ENCODE measurements at regions of chr3 and their contacts with region 1.

Region 1: GRCh38 chr3:98022978-98023820 is 11.9 kb downstream of the GABRR3 start:
- DNase-seq: peak; percentile 94
- ATAC-seq: peak; percentile 85

Region 2: GRCh38 chr3:97510795-97511194 is 512.4 kb before region 1 on chr3:
- intact Hi-C with region 1: no loop called
- DNase-seq: no peak
- ATAC-seq: no peak

Region 3: DNA sequence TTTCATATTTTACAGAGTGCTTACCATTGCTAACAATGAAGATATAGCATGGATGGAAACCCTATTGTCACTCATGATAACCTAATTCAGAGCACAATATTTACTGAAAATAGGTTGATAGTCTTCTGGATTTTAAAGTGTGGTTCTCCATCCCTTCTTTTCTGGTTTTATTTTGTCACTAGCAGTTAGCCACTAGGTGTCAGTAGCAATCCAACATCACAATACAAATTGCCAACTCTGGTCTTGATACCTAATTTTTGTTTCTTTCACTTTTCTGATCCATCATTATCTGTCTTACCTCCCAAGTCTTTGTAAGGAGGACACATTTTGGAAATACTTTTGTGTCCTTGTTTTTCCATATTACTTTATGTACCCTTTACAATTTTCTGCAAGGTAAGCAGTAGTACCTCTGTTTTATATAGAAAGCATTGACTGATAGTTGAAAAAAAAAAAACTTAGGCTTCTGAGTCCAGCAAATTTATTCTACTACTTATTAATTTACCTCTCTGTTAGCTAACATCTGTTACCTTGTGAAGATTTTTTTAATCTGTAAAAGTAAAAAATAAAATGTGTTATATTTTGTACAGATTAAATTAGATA is 229.7 kb before region 1 on chr3:
- intact Hi-C with region 1: loop called (anchors 1 kb)
- DNase-seq: no peak
- ATAC-seq: peak; percentile 37

Region 4: DNA sequence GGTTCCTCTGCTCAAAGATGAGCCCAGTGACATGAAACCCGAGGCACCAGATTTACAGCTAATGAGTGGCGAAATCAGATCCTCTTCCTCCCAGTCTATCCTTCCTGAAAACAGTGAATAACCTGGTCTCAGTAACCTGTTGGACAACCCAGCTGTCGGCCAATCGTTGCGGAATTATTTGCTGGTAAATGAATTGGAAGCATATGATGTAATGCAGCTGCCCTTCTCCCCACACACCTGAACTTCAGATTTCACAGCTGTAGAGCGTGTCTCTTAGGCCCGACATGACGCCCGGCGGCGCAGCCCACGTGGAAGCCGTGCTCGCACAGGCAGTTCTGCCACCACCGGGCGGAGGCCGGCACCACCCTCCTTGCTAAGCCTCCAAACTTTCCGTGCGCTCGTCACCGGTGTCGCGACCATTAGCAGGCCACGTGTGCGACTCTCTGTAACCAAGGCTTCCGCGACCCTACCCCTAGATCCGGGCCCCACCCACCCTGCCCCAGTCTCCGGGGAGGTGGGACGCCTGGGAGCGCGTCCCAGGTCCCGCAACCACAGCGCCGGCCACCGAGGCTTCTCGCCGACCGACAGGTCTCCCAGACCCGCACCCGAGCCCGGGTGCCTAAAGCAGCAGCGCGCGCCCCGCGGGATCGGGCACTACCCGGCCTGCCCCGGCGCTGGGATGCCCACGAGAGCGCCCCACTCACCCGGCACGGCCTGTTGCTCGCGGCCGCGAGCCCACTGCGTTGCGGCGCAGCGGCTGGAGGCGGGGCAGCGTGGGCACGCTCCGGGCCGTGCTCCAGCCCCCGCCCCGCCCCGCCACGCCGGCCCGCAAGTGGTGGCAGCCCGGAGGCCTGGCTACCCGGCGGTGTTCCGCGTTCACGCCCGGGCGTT is 51.3 kb before region 1 on chr3 and contains the start of gene RIOX2:
- intact Hi-C with region 1: loop called (anchors 5 kb)
- DNase-seq: peak; percentile 91
- ATAC-seq: peak; percentile 97
- total RNA-seq, gene RIOX2: 13.2 TPM